AG04450 (cell line): ENCODE measurements at regions of chr18 and their contacts with region 1.

Region 1: DNA sequence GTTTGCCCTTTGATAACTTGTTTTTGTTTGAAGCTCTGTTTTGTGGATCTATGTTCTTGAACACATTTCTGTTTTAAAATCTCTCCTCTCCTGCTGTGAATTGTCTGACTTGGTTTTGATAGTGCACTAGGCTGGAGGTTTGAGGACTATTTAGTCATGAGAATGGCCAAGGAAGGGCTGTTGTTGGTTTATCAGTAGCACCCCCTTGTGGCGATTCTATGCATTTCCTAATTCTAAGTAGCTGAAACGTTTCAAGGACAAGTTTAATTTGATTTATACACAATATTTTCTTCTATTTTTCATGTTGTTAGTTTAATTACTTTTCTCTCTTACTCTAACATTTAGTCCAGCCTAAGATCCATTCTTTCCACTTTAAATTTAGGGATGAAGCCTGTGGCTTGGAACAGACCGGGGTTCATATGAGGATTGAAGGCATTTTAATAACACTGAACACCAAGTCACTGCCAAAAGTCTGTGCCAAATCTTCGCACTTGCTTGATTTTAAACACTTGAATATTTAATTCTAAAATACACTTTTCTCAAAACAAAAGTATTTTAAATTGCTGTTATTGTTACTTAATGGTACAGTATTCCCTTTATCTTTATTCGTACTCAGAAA is 166.0 kb downstream of the SOCS6 start:
- DNase-seq: peak; percentile 53
- H3K4me3 ChIP-seq: no peak overlapping the region
- H3K27ac ChIP-seq: no peak overlapping the region
- H3K27me3 ChIP-seq: peaks cover 3% of the 10 kb centered on the region
- CTCF ChIP-seq: peak; percentile 84

Region 2: DNA sequence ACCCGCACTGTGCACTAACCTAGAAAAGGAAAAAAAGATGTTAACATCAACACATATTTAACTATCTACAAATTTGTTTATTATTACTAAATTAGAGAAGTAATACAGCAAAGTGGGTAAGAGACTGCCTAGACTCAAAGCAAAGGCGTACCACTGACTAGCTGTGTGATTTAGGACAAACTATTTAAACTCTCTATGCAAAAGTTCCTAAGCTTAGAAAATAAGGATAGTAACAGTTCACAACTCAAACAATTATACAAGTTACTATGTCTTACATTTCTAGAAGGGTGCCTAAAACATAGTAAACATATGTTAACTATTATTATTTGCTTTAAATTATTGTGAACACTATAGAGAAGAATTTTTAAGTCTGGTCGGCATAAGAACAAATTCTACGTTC is 368.7 kb before region 1 on chr18:
- CTCF ChIA-PET with region 1: interaction called, 14 read pairs
- POLR2A ChIA-PET with region 1: no interaction called
- DNase-seq: no peak
- H3K4me3 ChIP-seq: no peak overlapping the region
- H3K27ac ChIP-seq: no peak overlapping the region
- H3K27me3 ChIP-seq: no peaks in the 10 kb centered on the region
- CTCF ChIP-seq: no peak

Region 3: GRCh38 chr18:70172225-70172624 is 282.6 kb before region 1 on chr18:
- CTCF ChIA-PET with region 1: interaction called, 154 read pairs
- POLR2A ChIA-PET with region 1: no interaction called
- DNase-seq: no peak
- H3K4me3 ChIP-seq: no peak overlapping the region
- H3K27ac ChIP-seq: no peak overlapping the region
- H3K27me3 ChIP-seq: no peaks in the 10 kb centered on the region
- CTCF ChIP-seq: peak; percentile 63

Region 4: DNA sequence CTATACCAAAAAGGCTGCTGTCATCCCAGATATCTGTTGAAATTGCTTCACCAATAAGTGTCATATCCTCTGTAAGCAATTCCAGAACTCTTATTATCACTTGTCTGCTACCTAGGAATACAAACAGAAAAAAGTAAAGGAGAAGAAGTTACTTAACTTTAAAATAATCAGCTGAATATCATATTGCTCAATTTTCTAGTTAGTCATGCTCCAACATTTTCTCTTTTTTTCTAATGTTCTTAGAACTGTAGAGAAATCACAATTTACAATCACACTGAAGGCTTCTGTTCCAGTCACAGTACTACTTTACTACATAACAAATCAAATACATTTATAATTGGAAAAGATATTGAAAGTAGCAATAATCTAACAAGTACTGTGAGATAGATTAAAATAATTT is 266.7 kb before region 1 on chr18:
- CTCF ChIA-PET with region 1: interaction called, 296 read pairs
- POLR2A ChIA-PET with region 1: no interaction called
- DNase-seq: no peak
- H3K4me3 ChIP-seq: no peak overlapping the region
- H3K27ac ChIP-seq: no peak overlapping the region
- H3K27me3 ChIP-seq: no peaks in the 10 kb centered on the region
- CTCF ChIP-seq: no peak

Region 5: DNA sequence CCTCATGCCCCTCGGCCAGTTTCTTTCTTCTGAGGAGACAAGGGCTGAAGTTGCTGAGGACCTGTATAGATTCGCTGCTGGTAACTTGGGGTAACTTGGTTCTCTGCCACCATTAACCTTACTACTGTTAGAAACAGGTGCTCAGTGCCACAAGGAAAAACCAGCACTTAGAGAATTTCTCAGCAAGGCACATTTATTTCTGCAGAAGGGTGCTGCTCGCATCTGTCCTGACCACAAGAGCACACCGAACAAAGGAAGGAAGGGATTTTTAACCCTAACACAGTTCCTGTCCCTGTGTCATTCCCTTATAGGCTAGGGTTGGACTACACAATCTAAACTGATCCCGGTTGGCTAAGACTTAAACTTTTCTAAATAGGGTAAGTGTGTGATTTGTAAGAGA is 11.9 kb before region 1 on chr18:
- CTCF ChIA-PET with region 1: interaction called, 12 read pairs
- POLR2A ChIA-PET with region 1: no interaction called
- DNase-seq: no peak
- H3K4me3 ChIP-seq: no peak overlapping the region
- H3K27ac ChIP-seq: no peak overlapping the region
- H3K27me3 ChIP-seq: no peaks in the 10 kb centered on the region
- CTCF ChIP-seq: no peak

Region 6: GRCh38 chr18:70693246-70693645 is 238.4 kb after region 1 on chr18:
- CTCF ChIA-PET with region 1: no interaction called
- POLR2A ChIA-PET with region 1: no interaction called
- DNase-seq: peak; percentile 29
- H3K4me3 ChIP-seq: no peak overlapping the region
- H3K27ac ChIP-seq: no peak overlapping the region
- H3K27me3 ChIP-seq: no peaks in the 10 kb centered on the region
- CTCF ChIP-seq: no peak

Region 7: GRCh38 chr18:70732188-70732587 is 277.4 kb after region 1 on chr18:
- CTCF ChIA-PET with region 1: no interaction called
- POLR2A ChIA-PET with region 1: no interaction called
- DNase-seq: no peak
- H3K4me3 ChIP-seq: no peak overlapping the region
- H3K27ac ChIP-seq: no peak overlapping the region
- H3K27me3 ChIP-seq: no peaks in the 10 kb centered on the region
- CTCF ChIP-seq: no peak